WTC11 (cell line): ENCODE measurements at regions of chr19 and their contacts with region 1.

Region 1: GRCh38 chr19:14073261-14073924 is 807 bp downstream of the MISP3 start:
- DNase-seq: peak; percentile 71
- ATAC-seq: peak; percentile 32
- H3K4me3 Mint-ChIP-seq: peak overlapping the region; percentile 84
- H3K27ac Mint-ChIP-seq: no peak overlapping the region
- H3K4me1 Mint-ChIP-seq: peaks cover 8% of the 10 kb centered on the region; the same call in 1 of the 2 replicates
- H3K27me3 Mint-ChIP-seq: peaks cover 70% of the 10 kb centered on the region
- CTCF ChIP-seq: peak; percentile 26; the same call in 1 of the 2 replicates

Region 2: GRCh38 chr19:13872695-13873389 is 200.6 kb before region 1 on chr19:
- CTCF ChIA-PET with region 1: interaction called, 13 read pairs
- POLR2A ChIA-PET with region 1: no interaction called
- DNase-seq: peak; percentile 89
- ATAC-seq: peak; percentile 97
- H3K4me3 Mint-ChIP-seq: peak overlapping the region; percentile 56
- H3K27ac Mint-ChIP-seq: no peak overlapping the region
- H3K4me1 Mint-ChIP-seq: peaks cover 7% of the 10 kb centered on the region
- H3K27me3 Mint-ChIP-seq: peaks cover 98% of the 10 kb centered on the region
- CTCF ChIP-seq: no peak

Region 3: DNA sequence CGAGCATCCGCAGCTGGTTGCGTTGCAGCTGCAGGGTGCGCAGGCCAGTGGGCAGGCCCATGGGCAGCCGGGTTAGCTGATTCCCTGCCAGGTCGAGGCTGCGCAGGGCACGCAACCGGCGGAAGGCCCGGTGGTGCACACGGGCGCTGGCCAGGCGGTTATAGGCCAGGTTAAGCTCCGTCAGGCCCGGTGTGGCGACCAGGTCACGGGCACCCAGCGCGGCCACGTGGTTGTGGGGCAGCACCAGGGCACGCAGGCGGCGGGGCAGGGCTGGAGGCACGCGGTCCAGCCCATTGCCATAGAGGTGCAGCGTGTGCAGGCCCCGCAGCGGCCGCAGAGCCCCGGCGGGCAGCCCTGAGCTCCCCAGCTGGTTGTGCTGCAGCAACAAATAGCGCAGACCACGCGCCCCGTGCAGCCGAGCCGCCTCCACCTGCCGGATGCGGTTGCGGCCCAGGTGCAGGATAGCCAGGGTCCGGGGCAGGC is 140.4 kb before region 1 on chr19:
- CTCF ChIA-PET with region 1: interaction called, 11 read pairs
- POLR2A ChIA-PET with region 1: interaction called, 3 read pairs
- DNase-seq: peak; percentile 23
- ATAC-seq: no peak
- H3K4me3 Mint-ChIP-seq: no peak overlapping the region
- H3K27ac Mint-ChIP-seq: peak overlapping the region; percentile 59; the same call in 1 of the 2 replicates
- H3K4me1 Mint-ChIP-seq: peaks cover 29% of the 10 kb centered on the region
- H3K27me3 Mint-ChIP-seq: no peaks in the 10 kb centered on the region
- CTCF ChIP-seq: no peak

Region 4: GRCh38 chr19:13952154-13953035 is 121.0 kb before region 1 on chr19 and contains the start of gene DCAF15:
- CTCF ChIA-PET with region 1: interaction called, 15 read pairs
- POLR2A ChIA-PET with region 1: no interaction called
- DNase-seq: peak; percentile 99
- ATAC-seq: peak; percentile 98
- H3K4me3 Mint-ChIP-seq: peak within 1 kb of the TSS; percentile 87
- H3K27ac Mint-ChIP-seq: peak within 1 kb of the TSS; percentile 57
- H3K4me1 Mint-ChIP-seq: peaks cover 8% of the 10 kb centered on the region
- H3K27me3 Mint-ChIP-seq: no peaks in the 10 kb centered on the region; the same call in none of the 2 replicates
- CTCF ChIP-seq: no peak
- total RNA-seq, gene DCAF15: 82.9 to 89.0 TPM (median 83.3 TPM) in 3 replicates

Region 5: DNA sequence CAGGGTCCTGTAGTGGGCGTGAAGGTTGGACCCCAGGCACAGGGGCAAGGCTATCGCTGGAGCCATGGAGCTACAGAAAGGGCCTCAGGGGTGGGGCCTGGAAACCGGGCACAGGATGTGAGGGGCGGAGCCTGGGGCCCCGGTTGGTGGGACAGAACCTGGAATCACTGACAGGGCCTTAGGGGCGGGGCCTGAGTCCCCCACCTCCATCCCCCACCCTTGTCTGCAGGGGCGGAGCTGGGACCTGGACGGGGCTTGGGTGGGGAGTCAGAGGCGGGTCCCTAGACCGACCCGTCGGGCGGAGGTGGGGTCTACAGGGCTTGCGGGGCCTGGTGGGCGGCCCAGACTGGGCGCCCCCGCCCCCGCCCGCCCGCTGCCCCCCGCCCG is 95.1 kb before region 1 on chr19:
- CTCF ChIA-PET with region 1: interaction called, 18 read pairs
- POLR2A ChIA-PET with region 1: no interaction called
- DNase-seq: peak; percentile 99
- ATAC-seq: peak; percentile 93
- H3K4me3 Mint-ChIP-seq: peak overlapping the region; percentile 49
- H3K27ac Mint-ChIP-seq: peak overlapping the region; percentile 27; the same call in 1 of the 2 replicates
- H3K4me1 Mint-ChIP-seq: peaks cover 22% of the 10 kb centered on the region
- H3K27me3 Mint-ChIP-seq: no peaks in the 10 kb centered on the region; the same call in 1 of the 2 replicates
- CTCF ChIP-seq: no peak

Region 6: DNA sequence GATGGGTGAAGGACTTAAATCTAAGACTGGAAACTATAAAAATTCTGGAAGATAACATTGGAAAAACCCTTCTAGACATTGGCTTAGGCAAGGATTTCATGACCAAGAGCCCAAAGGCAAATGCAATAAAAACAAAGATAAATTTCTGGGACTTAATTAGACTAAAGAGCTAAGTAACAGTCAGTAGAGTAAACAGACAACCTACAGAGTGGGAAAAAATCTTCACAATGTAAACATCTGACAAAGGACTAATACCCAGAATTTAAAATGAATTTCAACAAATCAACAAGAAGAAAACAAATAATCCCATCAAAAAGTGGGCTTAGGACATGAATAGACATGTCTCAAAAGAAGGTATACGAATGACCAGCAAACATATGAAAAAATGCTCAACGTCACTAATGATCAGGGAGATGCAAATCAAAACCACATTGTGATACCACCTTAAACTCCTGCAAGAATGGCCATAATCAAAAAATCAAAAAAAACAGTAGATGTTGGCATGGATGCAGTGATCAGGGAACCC is 60.9 kb before region 1 on chr19:
- CTCF ChIA-PET with region 1: no interaction called
- POLR2A ChIA-PET with region 1: no interaction called
- DNase-seq: no peak
- ATAC-seq: no peak
- H3K4me3 Mint-ChIP-seq: no peak overlapping the region
- H3K27ac Mint-ChIP-seq: no peak overlapping the region
- H3K4me1 Mint-ChIP-seq: no peaks in the 10 kb centered on the region
- H3K27me3 Mint-ChIP-seq: peaks cover 4% of the 10 kb centered on the region
- CTCF ChIP-seq: no peak

Region 7: DNA sequence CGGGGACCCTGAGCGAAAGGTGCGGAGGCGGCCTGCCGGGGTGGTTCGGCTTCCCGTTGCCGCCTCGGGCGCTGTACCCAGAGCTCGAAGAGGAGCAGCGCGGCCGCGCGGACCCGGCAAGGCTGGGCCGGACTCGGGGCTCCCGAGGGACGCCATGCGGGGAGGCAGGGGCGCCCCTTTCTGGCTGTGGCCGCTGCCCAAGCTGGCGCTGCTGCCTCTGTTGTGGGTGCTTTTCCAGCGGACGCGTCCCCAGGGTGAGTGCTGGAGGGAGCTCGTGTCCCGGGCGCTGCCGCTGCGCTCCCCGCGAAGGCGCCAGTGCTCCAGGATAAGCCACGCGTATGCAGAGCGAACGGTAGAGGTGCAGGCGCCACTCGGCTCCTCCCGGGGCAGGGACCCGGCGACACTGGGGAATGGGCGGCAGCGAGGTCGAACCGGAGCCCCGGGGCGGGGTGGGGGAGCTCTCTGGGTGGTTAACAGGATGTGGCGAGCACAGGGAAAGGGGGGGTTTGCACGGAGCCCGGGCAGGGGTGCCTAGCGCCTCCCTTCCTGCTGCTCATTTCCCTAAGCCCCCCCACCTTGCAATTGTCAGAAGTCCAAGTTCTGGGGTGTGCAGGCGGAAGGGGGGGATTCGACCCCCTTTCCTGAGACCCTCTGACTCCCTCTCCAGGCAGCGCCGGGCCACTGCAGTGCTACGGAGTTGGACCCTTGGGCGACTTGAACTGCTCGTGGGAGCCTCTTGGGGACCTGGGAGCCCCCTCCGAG is 41.5 kb before region 1 on chr19 and contains the start of gene IL27RA:
- CTCF ChIA-PET with region 1: interaction called, 20 read pairs
- POLR2A ChIA-PET with region 1: no interaction called
- DNase-seq: peak; percentile 80
- ATAC-seq: peak; percentile 76
- H3K4me3 Mint-ChIP-seq: peak within 1 kb of the TSS; percentile 77
- H3K27ac Mint-ChIP-seq: 0 out of 2 replicates have a peak within 1 kb of the TSS, but pooled peaks have one; percentile 53
- H3K4me1 Mint-ChIP-seq: peaks cover 5% of the 10 kb centered on the region
- H3K27me3 Mint-ChIP-seq: peaks cover 15% of the 10 kb centered on the region
- CTCF ChIP-seq: peak; percentile 66; the same call in 1 of the 2 replicates
- total RNA-seq, gene IL27RA: 11.8 to 12.2 TPM (median 12.0 TPM) in 3 replicates

Region 8: GRCh38 chr19:14059093-14059480 is 14.3 kb before region 1 on chr19:
- CTCF ChIA-PET with region 1: interaction called, 164 read pairs
- POLR2A ChIA-PET with region 1: interaction called, 4 read pairs
- DNase-seq: peak; percentile 78
- ATAC-seq: peak; percentile 50
- H3K4me3 Mint-ChIP-seq: peak overlapping the region; percentile 86
- H3K27ac Mint-ChIP-seq: no peak overlapping the region
- H3K4me1 Mint-ChIP-seq: peaks cover 16% of the 10 kb centered on the region
- H3K27me3 Mint-ChIP-seq: peaks cover 32% of the 10 kb centered on the region
- CTCF ChIP-seq: peak; percentile 87